GM10248 (cell line): ENCODE measurements at regions of chr16 and their contacts with region 1.

Region 1: GRCh38 chr16:48632137-48632774 is 22.3 kb upstream of the N4BP1 start:
- DNase-seq: peak; percentile 38
- CTCF ChIP-seq: no peak

Region 2: DNA sequence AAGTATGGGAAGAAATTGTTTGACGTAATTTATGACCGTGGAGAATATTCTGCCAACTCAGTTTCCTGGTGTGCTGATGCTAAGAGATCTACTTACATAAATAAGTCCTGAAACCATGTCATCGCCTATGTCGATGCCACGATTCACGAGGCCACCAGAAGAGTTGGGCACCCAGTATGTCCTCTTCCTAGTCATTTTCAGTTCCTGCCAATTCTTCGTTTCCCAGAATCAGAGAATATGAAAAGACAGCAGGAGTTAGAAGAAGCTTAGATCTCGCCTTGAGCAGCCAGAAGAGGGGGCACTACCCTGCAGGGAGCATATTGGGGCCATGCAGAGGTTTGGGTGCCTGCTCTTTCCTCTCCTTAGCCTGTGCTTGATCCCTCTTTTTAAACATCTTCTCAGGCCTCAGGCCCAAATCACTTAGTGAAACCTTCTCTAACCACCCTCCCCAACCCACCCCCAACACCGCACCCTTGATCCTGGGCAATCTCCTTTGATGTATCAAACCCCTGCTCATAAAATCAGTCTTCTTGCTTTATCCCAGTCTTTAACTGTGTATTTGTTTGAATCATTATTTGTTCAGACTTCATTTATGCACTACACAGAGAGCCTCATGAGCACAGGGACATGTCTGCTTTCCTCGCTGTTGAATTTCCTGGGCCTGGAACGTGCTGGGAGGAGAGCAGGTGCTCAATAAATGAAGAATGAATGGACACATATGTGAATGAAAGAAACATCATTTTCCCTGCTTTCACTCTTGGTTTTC is 400.3 kb before region 1 on chr16:
- CTCF ChIA-PET with region 1: interaction called, 73 read pairs
- POLR2A ChIA-PET with region 1: no interaction called
- DNase-seq: peak; percentile 65
- CTCF ChIP-seq: peak; percentile 68

Region 3: GRCh38 chr16:48353565-48354163 is 278.6 kb before region 1 on chr16:
- CTCF ChIA-PET with region 1: interaction called, 67 read pairs
- POLR2A ChIA-PET with region 1: no interaction called
- DNase-seq: peak; percentile 78
- CTCF ChIP-seq: peak; percentile 68

Region 4: GRCh38 chr16:48534601-48535340 is 97.5 kb before region 1 on chr16:
- CTCF ChIA-PET with region 1: interaction called, 10 read pairs
- POLR2A ChIA-PET with region 1: no interaction called
- DNase-seq: no peak
- CTCF ChIP-seq: no peak

Region 5: DNA sequence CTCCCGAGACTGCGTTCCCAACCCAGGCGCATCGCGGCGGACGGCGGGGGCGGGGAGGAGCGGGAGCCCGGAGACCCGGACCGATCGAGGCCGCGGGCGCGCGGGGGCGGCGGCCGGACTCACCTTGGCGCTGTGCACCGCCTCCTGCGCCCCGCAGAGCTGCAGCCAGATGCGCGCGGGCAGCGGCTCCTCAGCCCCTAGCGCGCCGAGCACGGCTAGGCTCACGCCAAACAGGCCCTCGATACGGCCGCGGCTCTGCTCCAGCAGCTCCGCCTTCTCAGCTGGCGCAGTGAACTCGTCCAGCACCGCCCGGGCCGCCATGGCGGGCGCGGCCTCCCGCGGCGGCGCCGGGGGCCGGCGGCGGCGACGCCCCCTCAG is 22.6 kb before region 1 on chr16:
- CTCF ChIA-PET with region 1: interaction called, 15 read pairs
- POLR2A ChIA-PET with region 1: no interaction called
- DNase-seq: no peak
- CTCF ChIP-seq: no peak